ENCODE measurements at regions of chr16 and their contacts with region 1.

Region 1: DNA sequence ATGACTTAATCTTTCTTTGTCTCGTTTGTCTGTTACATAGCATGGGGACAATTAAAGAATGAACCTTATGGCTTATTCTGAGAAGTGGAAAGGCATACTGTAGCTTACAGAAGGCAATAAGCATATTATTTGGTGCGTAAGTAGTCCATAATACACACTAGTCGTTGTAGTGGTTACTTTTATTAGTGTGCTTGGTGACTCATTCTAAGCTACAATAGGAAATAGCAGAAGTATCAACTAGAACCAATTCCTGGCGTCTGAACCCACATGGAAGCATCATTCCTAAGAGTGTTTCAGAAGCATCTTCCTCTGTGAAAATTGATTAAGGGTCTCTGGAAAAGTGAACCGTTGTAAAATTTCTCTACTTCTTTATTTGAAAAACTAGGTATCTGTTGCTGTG is 777.8 kb upstream of the EEF2KMT start:
- DNase-seq: no peak
- H3K4me3 ChIP-seq: no peak overlapping the region
- H3K27ac ChIP-seq: no peak overlapping the region
- H3K4me1 ChIP-seq: no peaks in the 10 kb centered on the region
- H3K27me3 ChIP-seq: no peaks in the 10 kb centered on the region
- CTCF ChIP-seq: no peak

Region 2: GRCh38 chr16:5862103-5862840 is 13.1 kb before region 1 on chr16:
- CTCF ChIA-PET with region 1: no interaction called
- POLR2A ChIA-PET with region 1: interaction called, 10 read pairs
- intact Hi-C with region 1: no loop called
- DNase-seq: peak; percentile 19
- H3K4me3 ChIP-seq: no peak overlapping the region
- H3K27ac ChIP-seq: no peak overlapping the region
- H3K4me1 ChIP-seq: no peaks in the 10 kb centered on the region
- H3K27me3 ChIP-seq: no peaks in the 10 kb centered on the region
- CTCF ChIP-seq: no peak